PC-9 (cell line): ENCODE measurements at regions of chr10 and their contacts with region 1.

Region 1: DNA sequence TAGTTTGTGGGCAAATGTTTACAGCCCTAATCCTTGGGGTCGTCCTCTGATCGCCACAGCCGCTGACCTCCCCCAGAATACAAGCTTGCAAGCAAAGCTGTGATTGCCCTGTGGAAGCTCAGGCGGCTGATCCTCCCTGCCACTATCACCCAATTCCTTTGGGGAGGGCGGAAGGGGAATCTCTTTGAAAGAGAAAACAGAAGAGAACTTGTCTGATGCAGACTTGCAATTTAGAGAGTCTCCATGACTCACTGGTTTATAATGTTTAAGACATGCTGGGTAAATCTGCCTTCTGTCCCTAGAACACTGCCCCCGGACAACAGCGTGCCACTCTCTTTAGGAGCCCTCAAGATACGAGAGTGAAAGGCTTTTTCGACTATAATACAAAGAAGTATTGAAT is 75.5 kb downstream of the NRP1 start:
- DNase-seq: no peak
- H3K4me3 ChIP-seq: no peak overlapping the region
- H3K27ac ChIP-seq: no peak overlapping the region
- H3K4me1 ChIP-seq: peaks cover 28% of the 10 kb centered on the region
- H3K27me3 ChIP-seq: no peaks in the 10 kb centered on the region
- CTCF ChIP-seq: no peak

Region 2: DNA sequence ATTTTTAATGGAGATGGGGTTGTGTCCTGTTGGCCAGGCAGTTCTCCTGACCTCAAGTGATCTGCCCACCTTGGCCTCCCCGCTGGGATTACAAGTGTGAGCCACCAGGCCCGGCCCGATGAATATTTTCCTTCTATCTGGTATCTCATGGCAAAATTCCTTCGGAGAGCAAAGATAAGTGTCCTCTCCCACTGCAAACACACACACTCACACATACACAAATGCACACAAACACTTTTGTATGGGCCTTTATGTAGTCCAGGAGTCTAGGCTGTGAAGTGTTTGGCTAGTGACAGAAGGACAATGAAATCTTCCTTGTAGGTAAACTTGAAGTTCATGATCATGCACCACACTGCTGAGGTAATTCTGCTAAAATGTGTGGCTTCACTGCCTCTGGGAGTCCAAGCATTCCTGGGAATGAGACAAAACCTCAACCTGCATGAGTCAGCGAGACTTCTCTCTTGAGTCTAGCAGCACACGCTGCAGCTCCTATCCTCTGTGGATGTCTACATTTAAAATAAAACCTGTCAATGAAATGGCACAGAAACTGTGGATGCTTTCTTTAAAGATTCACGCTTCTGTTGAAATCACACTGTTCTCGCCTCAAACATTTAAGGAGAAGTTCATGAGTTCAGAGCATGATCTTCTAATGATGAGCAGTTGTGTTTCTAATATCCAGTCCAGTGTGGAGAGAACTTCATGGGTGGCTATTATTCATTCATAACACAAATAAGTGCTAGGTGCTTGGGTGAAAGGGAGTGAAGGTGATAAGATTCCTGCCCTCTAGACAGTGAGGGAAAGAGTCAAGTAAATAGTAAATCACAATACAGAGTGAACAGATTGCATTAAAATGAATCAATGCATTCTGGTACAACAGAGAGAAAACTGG is 21.0 kb before region 1 on chr10:
- CTCF ChIA-PET with region 1: no interaction called
- POLR2A ChIA-PET with region 1: no interaction called
- intact Hi-C with region 1: loop called (anchors 1 kb)
- DNase-seq: peak; percentile 72 to 94
- H3K4me3 ChIP-seq: no peak overlapping the region
- H3K27ac ChIP-seq: peak overlapping the region; percentile 89
- H3K4me1 ChIP-seq: peaks cover 56% of the 10 kb centered on the region
- H3K27me3 ChIP-seq: no peaks in the 10 kb centered on the region
- CTCF ChIP-seq: no peak

Region 3: GRCh38 chr10:33612551-33612950 is 353.6 kb after region 1 on chr10:
- CTCF ChIA-PET with region 1: no interaction called
- POLR2A ChIA-PET with region 1: no interaction called
- intact Hi-C with region 1: no loop called
- DNase-seq: no peak
- H3K4me3 ChIP-seq: no peak overlapping the region
- H3K27ac ChIP-seq: no peak overlapping the region
- H3K4me1 ChIP-seq: peaks cover 23% of the 10 kb centered on the region
- H3K27me3 ChIP-seq: no peaks in the 10 kb centered on the region
- CTCF ChIP-seq: no peak